Activated T-helper 1 cell treated with anti-CD3 and anti-CD28 coated beads, Interleukin-12 subunit alpha, Interleukin-12 subunit beta, Interleukin-2, Interleukin-4 antibody, amounts not matched to agents 30 ng/mL and 10 ng/mL and 1 ng/mL, durations not matched to agents 14 hours and 24 hours and 36 hours (primary cell): ENCODE measurements at regions of chr3 and their contacts with region 1.

Region 1: GRCh38 chr3:53072653-53073552 is 27.0 kb upstream of the SFMBT1 start:
- DNase-seq: peak; percentile 85
- H3K4me3 Mint-ChIP-seq: peak overlapping the region; percentile 89
- H3K27ac Mint-ChIP-seq: peak overlapping the region; percentile 95
- H3K4me1 Mint-ChIP-seq: peaks cover 19% of the 10 kb centered on the region
- H3K27me3 Mint-ChIP-seq: peaks cover 2% of the 10 kb centered on the region

Region 2: DNA sequence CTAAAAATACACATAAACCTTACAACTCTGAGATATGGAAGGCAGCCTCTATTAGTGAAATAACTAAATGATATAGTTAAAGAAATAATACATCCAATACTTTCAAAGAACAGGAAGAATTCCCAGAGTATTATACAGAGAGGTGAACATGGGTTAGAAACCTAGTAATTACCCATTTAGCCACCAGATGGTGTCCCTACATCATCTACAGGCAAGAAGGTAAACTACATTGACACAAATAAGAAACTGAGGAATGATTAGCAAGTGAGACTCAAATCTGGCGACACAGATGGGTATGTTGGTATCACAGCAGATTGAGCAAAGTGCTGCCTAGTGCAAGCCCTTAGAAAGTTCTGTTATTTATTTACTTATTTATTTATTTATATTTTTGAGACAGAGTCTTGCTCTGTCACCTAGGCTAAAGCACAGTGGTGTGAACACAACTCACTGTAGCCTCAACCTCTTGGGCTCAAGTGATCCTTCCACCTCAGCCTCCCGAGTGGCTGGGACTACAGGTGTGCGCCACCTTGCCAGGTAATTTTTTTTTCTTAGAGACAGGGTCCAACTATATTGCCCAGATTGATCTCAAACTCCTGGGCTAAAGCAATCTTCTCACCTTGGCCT is 330.4 kb before region 1 on chr3:
- intact Hi-C with region 1: loop called (anchors 1 kb)
- DNase-seq: no peak
- H3K4me3 Mint-ChIP-seq: no peak overlapping the region
- H3K27ac Mint-ChIP-seq: no peak overlapping the region
- H3K4me1 Mint-ChIP-seq: no peaks in the 10 kb centered on the region
- H3K27me3 Mint-ChIP-seq: no peaks in the 10 kb centered on the region

Region 3: GRCh38 chr3:52851348-52851747 is 221.6 kb before region 1 on chr3:
- intact Hi-C with region 1: loop called (anchors 1 kb)
- DNase-seq: no peak
- H3K4me3 Mint-ChIP-seq: no peak overlapping the region
- H3K27ac Mint-ChIP-seq: no peak overlapping the region
- H3K4me1 Mint-ChIP-seq: no peaks in the 10 kb centered on the region
- H3K27me3 Mint-ChIP-seq: no peaks in the 10 kb centered on the region

Region 4: GRCh38 chr3:52934630-52935530 is 138.0 kb before region 1 on chr3:
- intact Hi-C with region 1: loop called (anchors 1 kb)
- DNase-seq: peak; percentile 16
- H3K4me3 Mint-ChIP-seq: no peak overlapping the region
- H3K27ac Mint-ChIP-seq: peak overlapping the region; percentile 35
- H3K4me1 Mint-ChIP-seq: peaks cover 9% of the 10 kb centered on the region
- H3K27me3 Mint-ChIP-seq: no peaks in the 10 kb centered on the region

Region 5: GRCh38 chr3:53130179-53131061 is 57.5 kb after region 1 on chr3 and contains the start of gene RFT1:
- intact Hi-C with region 1: loop called (anchors 1 kb)
- DNase-seq: peak; percentile 96
- H3K4me3 Mint-ChIP-seq: peak within 1 kb of the TSS; percentile 96
- H3K27ac Mint-ChIP-seq: peak within 1 kb of the TSS; percentile 94
- H3K4me1 Mint-ChIP-seq: peaks cover 22% of the 10 kb centered on the region
- H3K27me3 Mint-ChIP-seq: no peaks in the 10 kb centered on the region
- total RNA-seq, gene RFT1: 44.9 and 46.2 TPM in 2 replicates

Region 6: GRCh38 chr3:53150247-53151085 is 77.6 kb after region 1 on chr3:
- intact Hi-C with region 1: no loop called
- DNase-seq: no peak
- H3K4me3 Mint-ChIP-seq: no peak overlapping the region
- H3K27ac Mint-ChIP-seq: no peak overlapping the region
- H3K4me1 Mint-ChIP-seq: no peaks in the 10 kb centered on the region
- H3K27me3 Mint-ChIP-seq: peaks cover 17% of the 10 kb centered on the region

Region 7: GRCh38 chr3:53525765-53526703 is 453.1 kb after region 1 on chr3:
- intact Hi-C with region 1: no loop called
- DNase-seq: no peak
- H3K4me3 Mint-ChIP-seq: no peak overlapping the region
- H3K27ac Mint-ChIP-seq: no peak overlapping the region
- H3K4me1 Mint-ChIP-seq: no peaks in the 10 kb centered on the region
- H3K27me3 Mint-ChIP-seq: peaks cover 12% of the 10 kb centered on the region